Heart left ventricle (tissue), 16 donors: ENCODE measurements at regions of chr20 and their contacts with region 1.

Region 1: DNA sequence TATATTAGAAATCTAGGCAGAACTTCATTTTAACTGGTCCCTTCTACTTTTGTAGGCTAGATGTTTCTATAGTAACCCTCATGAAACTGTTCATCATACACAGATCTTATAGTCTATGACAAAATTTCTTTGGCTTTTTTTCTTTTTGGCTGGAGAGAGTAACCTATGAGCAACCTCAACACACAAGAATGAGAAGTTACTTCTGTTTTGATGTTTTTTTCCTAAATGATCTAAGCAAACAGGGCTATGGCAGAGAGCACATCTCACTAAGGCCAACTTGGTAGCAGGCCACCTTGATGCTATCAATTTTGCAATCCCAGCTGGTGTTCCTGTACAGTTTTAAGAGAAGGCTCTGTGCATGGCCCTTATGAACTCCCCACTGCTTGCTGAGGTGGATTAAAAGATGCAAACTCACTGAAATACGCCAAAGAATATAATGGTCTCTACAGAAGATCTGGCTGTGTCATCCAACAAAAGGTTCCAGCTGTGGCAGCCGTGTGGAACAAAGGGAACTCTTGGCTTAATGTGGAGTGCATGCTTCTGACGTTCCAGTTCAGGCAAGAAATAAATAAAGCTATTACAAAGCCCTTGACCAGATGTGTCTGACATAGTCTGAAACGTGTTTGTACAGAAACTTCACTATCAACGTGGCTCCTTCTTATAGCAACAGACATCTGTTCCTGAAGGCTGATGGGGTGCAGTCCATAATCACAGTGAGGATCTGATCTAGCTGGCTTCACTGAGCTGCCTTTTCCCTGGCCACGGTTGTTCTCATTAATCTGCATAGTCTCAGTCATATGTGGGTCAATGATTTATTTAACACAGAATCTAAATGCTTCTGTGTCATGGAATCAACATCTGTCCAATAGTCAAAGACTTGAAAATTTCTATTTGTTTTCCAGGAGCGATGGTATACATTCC is 481.1 kb downstream of the BMP2 start:
- DNase-seq: no peak
- ATAC-seq: peak; percentile 73 to 76 (median 74)
- H3K4me3 ChIP-seq: no peak overlapping the region
- H3K27ac ChIP-seq: no peak overlapping the region
- H3K4me1 ChIP-seq: peaks cover 0 to 11% (median 0%) of the 10 kb centered on the region in 12 donors
- H3K27me3 ChIP-seq: no peaks in the 10 kb centered on the region
- CTCF ChIP-seq: no peak
- POLR2A ChIP-seq: no peak

Region 2: DNA sequence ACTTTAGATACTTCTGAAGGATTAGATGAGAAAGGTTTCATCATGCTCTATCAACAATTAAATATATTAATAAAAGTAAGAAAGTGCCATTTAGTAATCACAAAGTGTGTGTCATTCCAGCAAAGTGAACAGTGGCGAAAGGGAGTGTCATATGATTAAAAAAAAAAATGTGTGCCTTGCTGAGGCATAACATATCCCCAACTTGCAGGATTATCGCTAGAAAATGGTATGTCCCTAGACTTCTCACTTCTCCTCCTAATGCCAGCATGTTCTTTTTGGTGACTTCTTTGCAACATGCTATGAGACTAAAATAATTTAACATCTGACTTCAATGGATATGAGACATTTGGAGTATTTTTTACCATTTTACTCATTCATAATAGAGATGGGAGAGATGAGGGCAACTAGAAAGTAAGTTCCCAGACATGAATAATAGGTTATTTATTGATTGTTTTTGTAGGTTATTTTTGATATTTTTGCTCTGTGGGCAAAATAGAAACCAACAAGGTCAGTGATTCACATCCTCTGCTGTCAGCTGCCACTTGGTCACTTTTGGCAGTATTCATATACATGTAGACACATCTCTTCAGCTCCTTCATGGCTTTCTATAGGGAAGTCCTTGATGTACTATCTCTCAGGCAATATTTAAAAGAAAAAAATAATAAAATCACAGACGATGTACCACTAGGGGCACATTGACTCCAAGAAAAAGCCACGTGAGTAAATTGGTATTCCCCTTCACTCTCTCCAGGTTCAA is 111.0 kb before region 1 on chr20:
- intact Hi-C with region 1: loop called in 1 of 10 experiments (anchors 10 kb)
- DNase-seq: no peak
- ATAC-seq: no peak
- H3K4me3 ChIP-seq: no peak overlapping the region
- H3K27ac ChIP-seq: no peak overlapping the region
- H3K4me1 ChIP-seq: no peaks in the 10 kb centered on the region
- H3K27me3 ChIP-seq: no peaks in the 10 kb centered on the region
- CTCF ChIP-seq: no peak
- POLR2A ChIP-seq: no peak

Region 3: GRCh38 chr20:7207186-7207798 is 41.2 kb before region 1 on chr20:
- intact Hi-C with region 1: loop called in 1 of 10 experiments (anchors 5 kb)
- DNase-seq: no peak
- ATAC-seq: no peak
- H3K4me3 ChIP-seq: no peak overlapping the region
- H3K27ac ChIP-seq: no peak overlapping the region
- H3K4me1 ChIP-seq: peaks cover 0 to 17% (median 0%) of the 10 kb centered on the region in 12 donors
- H3K27me3 ChIP-seq: no peaks in the 10 kb centered on the region
- CTCF ChIP-seq: no peak
- POLR2A ChIP-seq: no peak

Region 4: DNA sequence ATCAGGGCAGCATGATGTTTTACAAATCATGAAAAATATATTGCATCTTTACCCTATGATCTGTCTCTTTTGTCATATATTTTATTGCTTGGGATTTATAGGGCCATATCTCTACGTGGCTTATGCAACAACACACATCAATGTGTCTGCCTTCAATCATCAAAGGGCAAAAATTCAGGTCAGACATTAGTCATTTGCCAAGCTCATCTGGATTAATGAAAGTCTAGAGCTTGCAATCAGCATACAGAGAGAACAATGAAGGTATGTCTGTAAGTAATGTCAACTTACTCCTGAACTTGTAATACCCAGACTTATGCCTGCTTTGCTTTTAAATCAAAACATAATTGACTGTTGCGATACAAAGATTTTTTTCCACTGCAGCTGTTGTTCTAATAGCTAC is 409.0 kb after region 1 on chr20:
- intact Hi-C with region 1: no loop called
- DNase-seq: no peak
- ATAC-seq: no peak
- H3K4me3 ChIP-seq: no peak overlapping the region
- H3K27ac ChIP-seq: no peak overlapping the region
- H3K4me1 ChIP-seq: no peaks in the 10 kb centered on the region
- H3K27me3 ChIP-seq: no peaks in the 10 kb centered on the region
- CTCF ChIP-seq: no peak
- POLR2A ChIP-seq: no peak